GM13977 (cell line): ENCODE measurements at regions of chr1 and their contacts with region 1.

Region 1: GRCh38 chr1:234772345-234773147 is 162.6 kb upstream of the IRF2BP2 start:
- DNase-seq: peak; percentile 88
- CTCF ChIP-seq: no peak

Region 2: DNA sequence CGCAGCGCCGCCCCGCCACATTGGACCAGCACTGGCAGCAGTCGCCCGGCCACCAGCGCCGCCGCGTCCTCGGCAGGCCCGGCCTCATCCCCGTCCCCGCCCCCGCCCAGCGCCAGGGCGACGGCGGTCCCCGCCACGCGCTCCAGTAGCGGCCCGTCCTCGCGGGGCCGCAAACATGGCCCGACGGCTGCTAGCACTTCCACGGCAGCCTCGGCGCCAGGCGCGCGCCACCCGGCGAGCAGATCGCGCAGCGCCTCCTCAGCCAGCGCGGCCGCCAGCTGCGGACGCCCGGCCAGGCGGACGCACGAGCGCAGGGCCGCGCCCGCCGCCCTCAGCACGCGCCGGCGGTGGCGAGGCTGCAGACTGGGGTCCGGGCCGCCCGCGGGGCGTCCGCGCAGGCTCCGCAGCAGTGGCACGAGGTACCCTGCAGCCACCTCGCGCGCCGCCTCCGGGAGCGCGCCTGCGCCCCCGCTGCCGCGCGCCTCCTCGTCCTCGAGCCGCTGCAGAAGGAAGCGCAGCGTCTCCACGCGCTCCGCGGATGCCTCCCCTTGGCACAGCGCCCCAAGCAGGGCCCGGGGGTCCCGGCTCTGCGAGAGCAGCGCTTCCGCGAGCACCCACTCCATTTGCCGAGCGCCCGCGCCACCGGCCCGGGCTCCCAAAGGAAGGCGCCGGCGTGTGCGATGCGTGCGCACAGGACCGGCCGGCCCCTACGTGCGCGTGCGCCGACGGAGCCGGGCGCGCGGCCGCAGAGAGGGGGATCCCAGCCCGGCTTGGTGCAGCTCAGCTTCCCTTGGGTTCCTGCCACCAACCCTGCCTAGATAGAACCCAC is 293.9 kb before region 1 on chr1 and contains the start of gene TARBP1:
- in situ Hi-C with region 1: loop called (anchors 25 kb)
- DNase-seq: peak; percentile 89
- CTCF ChIP-seq: peak; percentile 50

Region 3: GRCh38 chr1:234645474-234645953 is 127.0 kb before region 1 on chr1:
- in situ Hi-C with region 1: no loop called
- DNase-seq: no peak
- CTCF ChIP-seq: no peak

Region 4: DNA sequence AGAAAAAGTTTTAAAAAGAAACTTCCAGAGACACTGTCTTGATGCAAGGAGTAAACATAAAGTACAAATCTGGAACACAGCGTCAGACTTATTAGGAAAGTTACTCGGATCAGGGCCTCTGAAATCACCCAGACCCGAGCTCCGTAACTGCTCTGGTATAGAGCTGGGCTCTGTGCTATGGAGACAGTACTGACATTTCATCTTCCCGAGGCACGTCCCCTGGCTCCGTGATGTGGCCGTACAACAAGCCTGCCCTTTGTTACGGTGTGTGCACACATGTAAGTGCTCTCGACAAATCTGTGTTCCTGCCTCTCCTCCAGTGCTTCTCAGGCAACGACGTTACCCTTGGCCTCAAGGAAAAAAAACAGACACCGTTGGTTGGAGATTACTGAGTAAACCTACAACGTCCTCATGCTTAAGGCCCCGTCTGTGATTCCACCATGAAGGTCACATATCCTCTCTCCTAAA is 55.6 kb before region 1 on chr1:
- in situ Hi-C with region 1: no loop called
- DNase-seq: no peak
- CTCF ChIP-seq: no peak